GM12878 (cell line): ENCODE measurements at regions of chr7 and their contacts with region 1.

Region 1: GRCh38 chr7:126657599-126658358 is 595.0 kb downstream of the GRM8 start:
- DNase-seq: peak; percentile 77
- ATAC-seq: peak; percentile 95
- H3K4me3 ChIP-seq: no peak overlapping the region
- H3K27ac ChIP-seq: peak overlapping the region; percentile 93
- H3K4me1 ChIP-seq: peaks cover 21% of the 10 kb centered on the region
- H3K27me3 ChIP-seq: no peaks in the 10 kb centered on the region
- CTCF ChIP-seq: no peak
- EP300 ChIP-seq: peak; percentile 65 to 90; a peak in 2 of 4 replicates
- POLR2A ChIP-seq: no peak
- RAD21 ChIP-seq: no peak; the same call in 1 of the 2 replicates

Region 2: DNA sequence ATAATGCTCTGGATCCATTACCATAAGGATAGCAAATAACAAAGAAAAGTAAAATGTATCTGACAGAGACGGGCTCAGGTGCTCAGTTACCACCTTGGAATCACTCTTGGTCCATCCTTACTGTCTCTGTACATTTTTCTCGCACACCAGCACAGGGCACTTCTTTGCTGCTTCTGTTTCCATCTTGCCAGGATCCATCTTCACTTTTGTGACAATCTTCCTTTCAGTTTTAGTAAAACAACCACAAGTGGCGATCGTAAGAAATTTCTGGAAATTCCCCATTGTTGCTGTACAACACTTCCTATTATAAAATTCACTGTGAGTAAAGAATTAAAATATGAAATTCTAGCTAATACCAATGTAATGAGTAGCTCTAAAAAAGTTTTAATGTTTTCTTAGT is 100.5 kb before region 1 on chr7:
- CTCF ChIA-PET with region 1: interaction called, 3 read pairs
- POLR2A ChIA-PET with region 1: no interaction called
- RAD21 ChIA-PET with region 1: interaction called, 6 read pairs
- SMC1A ChIA-PET with region 1: interaction called, 3 read pairs
- in situ Hi-C with region 1: no loop called
- intact Hi-C with region 1: loop called (anchors 5 kb)
- DNase-seq: no peak
- ATAC-seq: peak; percentile 83
- H3K4me3 ChIP-seq: no peak overlapping the region; the same call in 1 of the 2 replicates
- H3K27ac ChIP-seq: peak overlapping the region; percentile 31; the same call in 1 of the 2 replicates
- H3K4me1 ChIP-seq: no peaks in the 10 kb centered on the region
- H3K27me3 ChIP-seq: no peaks in the 10 kb centered on the region
- CTCF ChIP-seq: no peak
- EP300 ChIP-seq: peak in 1 of 2 experiments; percentile 38; a peak in 1 of 4 replicates
- POLR2A ChIP-seq: no peak
- RAD21 ChIP-seq: no peak

Region 3: GRCh38 chr7:126635545-126635944 is 22.2 kb before region 1 on chr7:
- CTCF ChIA-PET with region 1: interaction called, 5 read pairs
- POLR2A ChIA-PET with region 1: no interaction called
- RAD21 ChIA-PET with region 1: interaction called, 5 read pairs
- SMC1A ChIA-PET with region 1: interaction called, 15 read pairs
- in situ Hi-C with region 1: no loop called
- intact Hi-C with region 1: no loop called
- DNase-seq: no peak
- ATAC-seq: no peak
- H3K4me3 ChIP-seq: no peak overlapping the region
- H3K27ac ChIP-seq: no peak overlapping the region
- H3K4me1 ChIP-seq: no peaks in the 10 kb centered on the region
- H3K27me3 ChIP-seq: no peaks in the 10 kb centered on the region
- CTCF ChIP-seq: no peak
- EP300 ChIP-seq: no peak
- POLR2A ChIP-seq: no peak
- RAD21 ChIP-seq: no peak

Region 4: GRCh38 chr7:126700807-126701604 is 43.2 kb after region 1 on chr7:
- CTCF ChIA-PET with region 1: interaction called, 14 read pairs
- POLR2A ChIA-PET with region 1: interaction called, 19 read pairs
- RAD21 ChIA-PET with region 1: interaction called, 189 read pairs
- SMC1A ChIA-PET with region 1: interaction called, 122 read pairs
- in situ Hi-C with region 1: no loop called
- intact Hi-C with region 1: loop called (anchors 1 kb)
- DNase-seq: peak; percentile 98
- ATAC-seq: peak; percentile 89
- H3K4me3 ChIP-seq: 0 out of 2 replicates have a peak overlapping the region, but pooled peaks have one; percentile 35
- H3K27ac ChIP-seq: peak overlapping the region; percentile 96
- H3K4me1 ChIP-seq: peaks cover 31% of the 10 kb centered on the region
- H3K27me3 ChIP-seq: no peaks in the 10 kb centered on the region
- CTCF ChIP-seq: no peak
- EP300 ChIP-seq: peak; percentile 97 to 99
- POLR2A ChIP-seq: peak; percentile 77
- RAD21 ChIP-seq: peak; percentile 28